ENCODE measurements at regions of chr1 and their contacts with region 1.

Region 1: GRCh38 chr1:107277022-107277421 is 136.2 kb downstream of the NTNG1 start:
- DNase-seq: no peak
- H3K4me3 ChIP-seq: no peak overlapping the region
- CTCF ChIP-seq: peak; percentile 63

Region 2: DNA sequence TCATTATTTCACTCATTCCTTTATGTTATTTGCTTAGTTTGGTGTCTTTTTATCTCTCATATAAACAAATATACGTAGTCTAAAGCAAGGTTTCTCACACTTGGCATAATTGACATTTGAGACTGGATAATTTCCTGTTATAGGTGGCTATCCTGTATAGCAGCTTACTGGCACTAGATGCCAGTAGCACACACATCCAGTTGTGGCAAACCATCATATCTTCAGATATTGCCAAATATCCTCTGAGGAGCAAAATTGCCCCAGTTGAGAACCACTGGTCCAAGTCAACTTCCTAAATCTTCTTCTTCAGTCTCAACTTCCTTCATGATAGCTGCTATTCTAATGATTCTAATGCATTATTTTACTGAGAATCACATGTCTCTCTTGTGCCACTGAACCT is 100.3 kb before region 1 on chr1:
- CTCF ChIA-PET with region 1: no interaction called
- POLR2A ChIA-PET with region 1: no interaction called
- DNase-seq: no peak
- H3K4me3 ChIP-seq: no peak overlapping the region
- CTCF ChIP-seq: no peak

Region 3: GRCh38 chr1:107262467-107263286 is 14.3 kb before region 1 on chr1:
- CTCF ChIA-PET with region 1: interaction called, 28 read pairs
- POLR2A ChIA-PET with region 1: no interaction called
- DNase-seq: peak; percentile 31
- H3K4me3 ChIP-seq: no peak overlapping the region
- CTCF ChIP-seq: no peak

Region 4: GRCh38 chr1:107294686-107295085 is 17.7 kb after region 1 on chr1:
- CTCF ChIA-PET with region 1: interaction called, 11 read pairs
- POLR2A ChIA-PET with region 1: no interaction called
- DNase-seq: peak; percentile 26
- H3K4me3 ChIP-seq: no peak overlapping the region
- CTCF ChIP-seq: no peak

Region 5: DNA sequence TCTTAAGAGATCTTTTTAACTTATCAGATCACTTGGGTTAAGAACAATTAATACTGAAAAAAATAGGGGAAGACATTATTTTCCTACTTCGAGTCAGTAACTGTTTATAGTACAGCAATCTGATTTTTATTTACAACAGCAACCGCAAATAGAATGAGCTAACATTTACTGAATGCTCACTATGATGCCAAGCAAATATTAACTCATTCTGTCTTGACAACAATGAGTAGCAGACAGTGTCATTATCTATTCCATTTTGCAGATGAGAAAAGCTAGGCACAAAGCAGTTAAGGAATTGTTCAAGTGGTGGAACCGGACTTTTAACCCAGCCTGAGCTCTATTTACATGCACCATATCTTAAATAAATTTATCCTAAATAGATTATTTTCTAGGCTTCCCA is 137.5 kb after region 1 on chr1:
- CTCF ChIA-PET with region 1: no interaction called
- POLR2A ChIA-PET with region 1: no interaction called
- DNase-seq: no peak
- H3K4me3 ChIP-seq: no peak overlapping the region
- CTCF ChIP-seq: no peak

Region 6: GRCh38 chr1:107547363-107548155 is 270.5 kb after region 1 on chr1:
- CTCF ChIA-PET with region 1: interaction called, 11 read pairs
- POLR2A ChIA-PET with region 1: no interaction called
- DNase-seq: no peak
- H3K4me3 ChIP-seq: no peak overlapping the region
- CTCF ChIP-seq: no peak

Region 7: GRCh38 chr1:107590900-107591633 is 314.0 kb after region 1 on chr1:
- CTCF ChIA-PET with region 1: no interaction called
- POLR2A ChIA-PET with region 1: no interaction called
- DNase-seq: no peak
- H3K4me3 ChIP-seq: no peak overlapping the region
- CTCF ChIP-seq: no peak

Region 8: DNA sequence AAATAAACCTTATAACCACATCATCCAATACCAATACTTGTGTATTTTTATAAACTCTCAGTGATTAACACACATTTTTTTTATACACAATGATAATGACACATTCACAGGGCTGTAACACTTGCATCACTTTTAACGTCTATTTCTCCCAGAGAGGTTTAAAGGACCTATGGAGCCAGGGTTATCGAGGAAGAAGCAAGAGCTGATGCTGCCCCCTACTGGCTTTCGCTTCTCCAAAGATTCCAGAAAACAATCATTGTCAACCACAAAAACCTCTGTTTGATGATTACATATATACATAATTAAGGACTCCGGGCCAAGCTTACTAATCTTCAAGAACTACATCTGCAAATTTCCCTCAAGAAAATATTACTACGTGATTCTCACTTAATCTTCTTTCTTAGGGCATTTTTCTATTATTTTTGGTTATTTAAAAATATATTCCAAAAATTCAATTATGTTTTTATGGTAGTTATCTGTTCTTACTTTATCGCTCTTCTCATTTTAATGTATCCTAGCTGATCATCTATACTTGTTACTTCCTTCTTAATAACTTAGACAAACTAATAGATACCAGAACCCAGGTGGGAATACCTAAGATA is 473.4 kb after region 1 on chr1:
- CTCF ChIA-PET with region 1: interaction called, 131 read pairs
- POLR2A ChIA-PET with region 1: no interaction called
- DNase-seq: peak; percentile 38
- H3K4me3 ChIP-seq: no peak overlapping the region
- CTCF ChIP-seq: peak; percentile 65